ENCODE measurements at regions of chr5 and their contacts with region 1.

Region 1: GRCh38 chr5:101390151-101390908 is 487.2 kb upstream of the ST8SIA4 start:
- DNase-seq: peak; percentile 46
- ATAC-seq: peak; percentile 74
- H3K4me3 ChIP-seq: no peak overlapping the region
- H3K27ac ChIP-seq: no peak overlapping the region
- H3K4me1 ChIP-seq: no peaks in the 10 kb centered on the region
- H3K27me3 ChIP-seq: no peaks in the 10 kb centered on the region
- CTCF ChIP-seq: peak; percentile 77
- EP300 ChIP-seq: no peak
- POLR2A ChIP-seq: no peak
- RAD21 ChIP-seq: no peak

Region 2: DNA sequence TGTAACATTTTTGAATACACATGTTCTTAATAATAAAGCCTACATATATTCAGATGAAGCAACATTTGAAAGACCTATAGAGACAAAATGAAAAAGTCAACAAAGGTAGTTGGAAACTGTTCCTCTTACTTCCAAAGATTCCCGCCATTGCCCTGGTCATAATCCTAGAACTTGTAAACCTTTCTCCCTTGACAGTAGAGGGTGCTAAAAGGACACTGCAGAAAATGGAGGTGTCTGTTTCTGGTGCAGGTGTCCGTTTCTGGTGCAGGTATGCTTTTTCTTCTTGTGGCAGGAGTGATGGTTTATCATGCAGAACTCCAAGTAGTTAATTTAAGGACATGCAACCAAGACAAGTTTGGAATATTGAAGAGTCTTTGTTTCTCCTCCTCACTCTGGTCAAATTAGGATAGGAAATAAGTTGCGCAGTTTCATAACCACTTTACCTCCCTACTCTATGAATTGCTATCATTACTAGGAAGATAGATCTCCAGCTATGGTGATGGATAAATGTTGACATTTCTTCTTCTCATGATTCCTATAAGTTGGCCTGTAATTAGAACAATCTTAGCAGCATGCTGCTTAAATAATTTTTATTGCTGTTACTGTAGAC is 911.1 kb before region 1 on chr5:
- CTCF ChIA-PET with region 1: interaction called, 4 read pairs
- POLR2A ChIA-PET with region 1: no interaction called
- in situ Hi-C with region 1: loop called (anchors 25 kb)
- intact Hi-C with region 1: loop called (anchors 1 kb)
- DNase-seq: peak; percentile 45
- ATAC-seq: peak; percentile 79
- H3K4me3 ChIP-seq: no peak overlapping the region
- H3K27ac ChIP-seq: no peak overlapping the region
- H3K4me1 ChIP-seq: no peaks in the 10 kb centered on the region
- H3K27me3 ChIP-seq: no peaks in the 10 kb centered on the region
- CTCF ChIP-seq: peak; percentile 69
- EP300 ChIP-seq: no peak
- POLR2A ChIP-seq: no peak
- RAD21 ChIP-seq: 0 out of 2 replicates have a peak, but pooled peaks have one; percentile 26

Region 3: DNA sequence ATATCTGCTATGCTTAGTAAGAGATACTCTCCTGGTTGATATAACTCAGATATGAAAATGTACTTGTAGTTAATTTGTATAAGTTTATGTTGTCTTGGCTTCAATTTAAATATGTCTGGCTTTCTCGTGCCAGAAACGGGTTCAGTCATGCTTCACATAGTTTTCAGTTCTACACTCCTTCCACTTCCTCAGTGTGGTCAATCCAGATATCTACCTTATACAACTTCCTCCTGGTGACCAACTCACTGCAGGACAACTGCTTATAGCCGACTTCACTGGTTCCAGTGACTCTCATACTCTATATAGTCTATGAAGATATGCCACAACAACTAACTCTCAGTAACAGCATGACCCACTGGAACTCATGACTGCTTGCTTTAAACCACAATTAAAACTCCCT is 215.4 kb after region 1 on chr5:
- CTCF ChIA-PET with region 1: no interaction called
- POLR2A ChIA-PET with region 1: no interaction called
- in situ Hi-C with region 1: no loop called
- intact Hi-C with region 1: no loop called
- DNase-seq: no peak
- ATAC-seq: no peak
- H3K4me3 ChIP-seq: no peak overlapping the region
- H3K27ac ChIP-seq: no peak overlapping the region
- H3K4me1 ChIP-seq: no peaks in the 10 kb centered on the region
- H3K27me3 ChIP-seq: no peaks in the 10 kb centered on the region
- CTCF ChIP-seq: no peak
- EP300 ChIP-seq: no peak
- POLR2A ChIP-seq: no peak
- RAD21 ChIP-seq: no peak

Region 4: DNA sequence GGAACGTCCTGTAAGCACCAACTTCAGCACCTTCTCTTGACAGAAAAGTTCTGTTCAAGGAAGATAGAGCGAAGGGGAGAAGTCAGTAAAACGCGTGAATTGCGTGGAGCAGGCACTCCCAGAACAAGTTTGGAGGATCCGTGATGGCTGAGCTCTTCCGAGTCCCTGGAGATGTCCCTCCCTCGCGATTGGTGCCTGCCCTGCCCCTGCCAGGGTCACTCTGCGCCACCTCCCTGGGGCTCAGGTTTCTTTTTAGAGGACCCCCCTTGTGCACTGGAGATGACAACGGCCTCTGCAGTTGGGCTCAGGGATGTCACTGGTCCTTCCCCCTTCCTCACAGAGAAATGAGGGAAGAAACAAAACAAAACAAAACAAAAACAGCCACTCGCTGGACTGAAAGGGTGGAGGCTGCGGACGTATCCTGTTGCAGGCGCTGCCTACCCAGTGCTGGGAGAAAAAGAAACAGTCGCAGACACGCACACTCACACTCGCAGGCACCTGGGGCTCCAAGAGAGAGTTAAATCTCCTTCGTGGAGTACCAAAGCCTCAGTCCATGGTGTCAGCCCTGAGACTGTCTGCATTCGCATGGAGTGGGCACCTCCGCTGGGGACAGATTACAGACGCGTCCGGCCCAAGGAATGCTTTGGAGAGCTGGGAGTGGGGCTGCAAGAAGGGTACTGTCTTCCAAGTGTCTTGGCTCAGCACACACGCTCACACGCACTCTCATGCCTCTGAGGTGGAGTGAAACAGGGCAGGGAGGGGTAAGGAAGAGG is 393.1 kb after region 1 on chr5:
- CTCF ChIA-PET with region 1: no interaction called
- POLR2A ChIA-PET with region 1: no interaction called
- in situ Hi-C with region 1: no loop called
- intact Hi-C with region 1: no loop called
- DNase-seq: no peak
- ATAC-seq: no peak
- H3K4me3 ChIP-seq: no peak overlapping the region
- H3K27ac ChIP-seq: no peak overlapping the region
- H3K4me1 ChIP-seq: no peaks in the 10 kb centered on the region
- H3K27me3 ChIP-seq: no peaks in the 10 kb centered on the region
- CTCF ChIP-seq: no peak
- EP300 ChIP-seq: no peak
- POLR2A ChIP-seq: no peak
- RAD21 ChIP-seq: no peak

Measured in HepG2 (cell line).